ENCODE measurements at regions of chr21 and their contacts with region 1.

Region 1: GRCh38 chr21:42818328-42818749 is 61.0 kb downstream of the WDR4 start:
- DNase-seq: peak; percentile 81
- ATAC-seq: peak; percentile 94
- H3K4me3 ChIP-seq: no peak overlapping the region
- H3K27ac ChIP-seq: no peak overlapping the region
- H3K4me1 ChIP-seq: no peaks in the 10 kb centered on the region
- H3K27me3 ChIP-seq: no peaks in the 10 kb centered on the region
- CTCF ChIP-seq: peak; percentile 85

Region 2: GRCh38 chr21:42513985-42514882 is 304.1 kb before region 1 on chr21:
- intact Hi-C with region 1: no loop called
- DNase-seq: peak; percentile 86
- ATAC-seq: peak; percentile 68
- H3K4me3 ChIP-seq: peak overlapping the region; percentile 88
- H3K27ac ChIP-seq: peak overlapping the region; percentile 89
- H3K4me1 ChIP-seq: peaks cover 21% of the 10 kb centered on the region
- H3K27me3 ChIP-seq: no peaks in the 10 kb centered on the region
- CTCF ChIP-seq: no peak

Region 3: DNA sequence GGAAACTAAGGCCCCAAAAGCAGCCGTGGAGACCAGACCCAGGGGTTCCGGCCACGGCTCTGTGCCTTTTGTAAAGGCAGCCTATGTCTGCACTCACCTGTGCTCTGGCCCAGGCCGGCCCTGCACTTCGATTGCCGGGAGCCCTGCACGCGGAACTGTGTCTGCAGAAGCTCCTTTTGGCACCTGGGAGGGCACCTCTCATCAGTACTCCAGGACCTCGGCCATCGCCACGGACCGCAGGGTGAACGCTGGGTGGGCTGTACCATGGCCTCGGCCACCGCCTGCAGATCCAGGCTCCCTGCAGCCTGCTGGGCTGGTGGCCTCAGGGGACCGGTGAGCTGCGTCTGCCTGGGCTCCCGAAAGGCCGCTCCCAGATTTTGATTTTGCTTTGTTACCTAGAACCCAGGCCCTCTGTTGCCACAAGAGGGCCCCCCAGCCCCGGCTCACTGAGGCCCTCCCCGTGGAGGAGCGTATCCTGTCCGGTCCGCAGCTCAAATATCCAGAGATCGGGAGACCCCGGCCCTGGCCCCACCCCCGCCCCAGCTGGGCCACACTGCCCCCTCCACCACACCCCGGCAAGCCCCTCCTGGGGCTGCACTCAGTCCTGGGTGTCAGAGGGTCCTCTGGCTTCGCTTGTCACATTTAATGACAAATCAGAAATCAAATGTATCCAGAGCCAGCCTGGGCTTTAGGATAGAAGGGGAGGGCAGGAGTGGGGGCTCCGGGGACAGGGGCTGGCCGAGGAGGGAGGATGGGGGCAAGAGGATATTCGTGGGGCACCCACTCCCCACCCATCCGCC is 225.1 kb before region 1 on chr21:
- intact Hi-C with region 1: loop called (anchors 5 kb)
- DNase-seq: peak; percentile 84
- ATAC-seq: peak; percentile 91
- H3K4me3 ChIP-seq: no peak overlapping the region
- H3K27ac ChIP-seq: no peak overlapping the region
- H3K4me1 ChIP-seq: no peaks in the 10 kb centered on the region
- H3K27me3 ChIP-seq: no peaks in the 10 kb centered on the region
- CTCF ChIP-seq: peak; percentile 75

Region 4: GRCh38 chr21:42652527-42653230 is 165.7 kb before region 1 on chr21:
- intact Hi-C with region 1: loop called (anchors 10 kb)
- DNase-seq: peak; percentile 89
- ATAC-seq: peak; percentile 91
- H3K4me3 ChIP-seq: peak overlapping the region; percentile 47
- H3K27ac ChIP-seq: no peak overlapping the region
- H3K4me1 ChIP-seq: peaks cover 27% of the 10 kb centered on the region
- H3K27me3 ChIP-seq: peaks cover 4% of the 10 kb centered on the region
- CTCF ChIP-seq: peak; percentile 62